GM13977 (cell line): ENCODE measurements at regions of chr21 and their contacts with region 1.

Region 1: DNA sequence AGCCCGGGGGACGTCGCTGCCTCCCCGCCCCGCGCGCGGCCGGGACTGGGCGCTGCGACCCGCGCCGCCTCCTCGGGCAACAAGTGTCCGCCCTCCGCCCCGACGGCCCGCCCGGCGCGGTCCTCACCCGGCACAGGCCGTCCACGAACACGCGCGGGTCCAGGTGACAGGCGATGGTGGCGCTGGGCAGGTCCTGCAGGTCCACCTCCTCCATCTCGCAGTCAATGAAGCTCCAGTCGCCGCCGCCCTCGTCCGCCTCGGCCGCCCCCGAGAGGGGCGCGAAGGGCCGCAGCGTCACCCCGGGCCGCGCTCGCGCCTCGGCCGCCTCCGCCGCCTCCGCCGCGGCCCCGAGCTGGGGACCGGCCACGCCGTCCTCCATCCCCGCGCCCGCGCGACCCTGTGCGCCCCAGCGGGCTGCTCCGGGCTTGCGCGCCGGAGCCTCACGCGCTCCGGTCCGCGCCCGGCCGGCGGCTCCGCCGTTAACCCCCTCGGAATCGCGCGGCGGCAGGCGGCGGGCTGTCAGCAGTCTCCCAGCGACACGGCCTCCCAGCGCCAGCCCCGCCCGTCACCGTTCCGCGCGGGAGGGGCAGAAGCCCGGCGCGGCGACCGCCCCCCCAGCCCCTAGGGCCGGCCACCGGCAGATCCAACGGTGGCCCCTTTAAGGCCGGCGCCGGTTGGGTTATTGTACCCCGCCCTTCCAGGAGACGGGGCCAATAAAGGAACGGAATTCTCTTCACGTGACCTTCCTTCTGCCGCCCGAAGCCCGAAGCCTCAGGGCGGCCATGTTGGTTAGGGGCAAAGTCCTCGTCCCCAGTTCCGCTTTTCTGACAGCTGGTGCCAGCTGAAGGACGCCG is at the start of gene RCAN1:
- DNase-seq: peak; percentile 95
- CTCF ChIP-seq: no peak

Region 2: DNA sequence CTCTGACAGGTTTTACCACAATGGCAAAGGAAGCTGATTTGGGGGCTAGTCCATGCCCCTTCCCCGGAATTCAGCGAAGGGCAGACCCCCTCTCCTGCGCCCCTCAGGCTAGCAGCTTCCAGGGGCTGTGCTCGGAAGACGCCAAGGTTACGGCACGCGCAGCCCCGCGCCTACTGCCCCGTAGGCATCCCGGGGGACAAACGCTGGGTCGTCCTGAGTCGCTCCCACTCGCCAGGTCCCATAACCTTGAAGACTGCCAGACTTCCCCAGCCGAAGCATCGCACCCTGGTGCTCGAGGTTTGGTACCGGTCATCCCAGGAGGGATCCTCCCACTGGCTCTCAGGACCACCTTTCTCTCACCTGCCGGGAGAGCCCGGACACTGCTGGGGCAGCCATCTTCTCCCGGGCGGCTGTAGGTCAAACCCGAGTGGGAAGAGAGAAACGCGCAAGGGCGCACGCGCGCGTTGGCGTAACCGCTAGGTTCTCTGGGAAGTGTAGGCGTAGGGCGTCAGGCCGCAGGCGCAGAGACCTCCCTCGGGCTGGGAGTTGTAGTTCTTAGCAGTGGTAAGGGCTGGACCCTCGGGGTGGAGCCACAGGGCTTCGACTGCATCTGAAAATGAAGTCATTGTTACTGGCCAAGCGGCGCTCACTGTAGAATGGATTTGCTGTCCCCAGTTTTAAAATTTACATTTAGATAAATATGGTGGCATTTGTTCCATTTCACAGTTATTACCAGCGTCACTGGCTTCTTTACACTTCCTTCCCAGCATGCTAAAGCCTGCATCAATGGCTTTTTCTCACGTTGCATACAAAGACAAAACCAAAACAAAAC is 699.3 kb before region 1 on chr21 and contains the start of gene ATP5PO:
- in situ Hi-C with region 1: loop called (anchors 25 kb)
- DNase-seq: peak; percentile 91
- CTCF ChIP-seq: no peak

Region 3: DNA sequence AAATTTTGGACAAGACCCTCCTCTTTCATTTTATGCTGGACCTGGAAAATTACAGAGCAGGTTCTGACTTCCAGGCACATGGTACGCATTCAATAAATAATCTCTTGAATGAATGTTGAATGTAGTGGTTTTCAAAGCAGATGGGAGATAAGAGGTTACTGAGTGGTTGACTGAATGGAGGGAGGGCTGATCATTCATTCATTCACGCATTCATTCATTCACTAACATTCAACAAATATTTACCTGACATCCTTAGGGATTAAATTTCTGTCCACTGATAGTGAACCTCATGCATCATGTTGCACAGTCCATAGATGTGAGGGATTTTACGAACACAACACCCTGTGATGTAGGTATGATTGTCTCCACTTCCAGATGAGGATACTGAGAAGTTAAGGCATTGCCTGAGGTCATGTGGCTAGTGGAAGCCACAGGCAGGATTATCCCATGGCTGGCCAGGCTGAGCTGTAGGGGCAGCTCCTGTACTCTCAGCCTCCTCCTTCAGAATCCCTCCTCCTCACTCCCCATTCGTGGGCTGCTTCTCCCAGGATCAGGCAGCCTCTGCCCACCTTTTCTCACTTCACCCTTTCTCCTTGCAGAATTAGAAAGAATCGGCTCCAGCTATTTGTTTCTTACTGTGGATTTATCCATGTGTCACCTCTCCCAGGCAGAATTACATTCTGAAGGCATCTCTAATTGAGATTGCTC is 650.9 kb before region 1 on chr21:
- in situ Hi-C with region 1: no loop called
- DNase-seq: no peak
- CTCF ChIP-seq: no peak